Common myeloid progenitor, CD34-positive (primary cell): ENCODE measurements at regions of chr2 and their contacts with region 1.

Region 1: DNA sequence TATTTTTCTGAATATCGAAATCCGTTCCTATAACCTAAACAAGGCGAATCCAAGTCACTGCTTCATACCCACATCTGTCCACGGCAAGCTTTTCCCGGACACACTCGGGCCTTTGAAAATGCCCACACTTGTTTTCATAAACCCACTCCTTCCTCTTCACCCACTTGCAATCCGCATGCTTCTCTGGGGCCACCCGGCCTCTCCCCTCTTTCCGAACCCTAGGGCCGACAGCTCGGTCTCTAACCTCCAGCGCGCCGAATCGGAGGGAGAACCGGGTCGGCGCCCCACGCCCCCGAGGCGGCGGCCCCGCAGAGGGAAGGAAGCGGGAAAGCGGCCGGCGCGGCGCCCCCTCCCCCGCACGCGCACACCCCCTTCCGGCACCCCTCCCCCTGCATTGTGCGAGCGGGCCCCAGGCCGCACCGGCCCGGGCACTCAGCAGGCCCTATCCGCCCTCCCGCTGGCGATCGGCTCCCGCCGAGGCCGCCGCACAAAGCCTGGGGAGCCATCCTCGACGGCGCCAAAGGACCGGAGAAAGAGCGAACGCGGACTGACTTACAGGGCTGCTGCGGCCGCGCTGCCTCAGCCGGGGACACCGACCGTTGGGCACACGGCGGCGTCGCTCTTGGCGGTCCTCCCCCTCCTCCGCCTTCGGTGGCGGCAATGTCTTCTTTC is 467 bp downstream of the PUM2 start:
- DNase-seq: peak; percentile 42 to 68 (median 57)
- H3K4me3 ChIP-seq: peak overlapping the region; percentile 84 to 98 (median 93)
- H3K27ac ChIP-seq: peak overlapping the region; percentile 93 to 95
- H3K4me1 ChIP-seq: peaks cover 14 to 46% (median 42%) of the 10 kb centered on the region in 4 experiments
- H3K27me3 ChIP-seq: no peaks in the 10 kb centered on the region

Region 2: DNA sequence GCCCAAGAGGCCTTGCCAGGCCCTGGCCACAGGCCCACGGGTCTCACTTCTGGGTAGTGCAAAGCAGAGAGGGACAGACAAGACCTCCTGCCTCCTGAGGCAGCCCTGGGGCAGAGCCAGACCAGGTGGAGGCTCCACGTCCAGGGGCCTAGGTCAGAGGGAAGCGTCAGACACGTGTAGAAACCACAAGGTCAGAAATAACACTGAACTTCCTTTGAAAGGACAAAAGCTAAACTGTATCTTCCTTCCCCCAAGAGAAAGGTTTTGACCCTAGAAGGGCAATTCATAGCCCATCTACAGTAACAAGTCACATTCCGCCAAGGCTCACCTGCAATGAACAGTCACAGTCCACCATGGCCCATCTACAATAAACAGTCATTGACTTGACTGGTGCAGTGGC is 143.1 kb before region 1 on chr2:
- CTCF ChIA-PET with region 1: no interaction called
- POLR2A ChIA-PET with region 1: no interaction called
- DNase-seq: no peak
- H3K4me3 ChIP-seq: no peak overlapping the region
- H3K27ac ChIP-seq: no peak overlapping the region
- H3K4me1 ChIP-seq: peaks cover 0 to 11% (median 8%) of the 10 kb centered on the region in 4 experiments
- H3K27me3 ChIP-seq: no peaks in the 10 kb centered on the region

Region 3: DNA sequence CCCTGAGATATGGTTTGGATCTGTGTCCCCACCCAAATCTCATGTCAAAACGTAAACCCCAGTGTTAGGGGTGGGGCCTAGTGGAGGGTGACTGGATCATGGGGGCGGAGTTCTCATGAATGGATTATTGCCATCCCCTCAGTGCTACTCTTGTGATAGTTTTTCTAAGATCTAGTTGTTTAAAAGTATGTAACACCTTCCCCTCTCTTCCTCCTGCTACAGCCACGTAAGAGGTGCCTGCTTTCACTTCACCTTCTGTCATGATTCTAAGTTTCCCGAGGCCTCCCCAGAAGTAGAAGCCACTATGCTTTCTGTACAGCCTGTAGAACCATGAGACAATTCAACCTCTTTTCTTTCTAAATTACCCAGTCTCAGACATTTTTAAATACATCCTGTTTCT is 16.4 kb before region 1 on chr2:
- CTCF ChIA-PET with region 1: interaction called, 18 read pairs
- POLR2A ChIA-PET with region 1: interaction called, 3 read pairs
- DNase-seq: no peak
- H3K4me3 ChIP-seq: no peak overlapping the region
- H3K27ac ChIP-seq: no peak overlapping the region
- H3K4me1 ChIP-seq: peaks cover 0 to 5% (median 3%) of the 10 kb centered on the region in 4 experiments
- H3K27me3 ChIP-seq: no peaks in the 10 kb centered on the region